Sciatic nerve (tissue), 2 donors: ENCODE measurements at regions of chr20 and their contacts with region 1.

Region 1: DNA sequence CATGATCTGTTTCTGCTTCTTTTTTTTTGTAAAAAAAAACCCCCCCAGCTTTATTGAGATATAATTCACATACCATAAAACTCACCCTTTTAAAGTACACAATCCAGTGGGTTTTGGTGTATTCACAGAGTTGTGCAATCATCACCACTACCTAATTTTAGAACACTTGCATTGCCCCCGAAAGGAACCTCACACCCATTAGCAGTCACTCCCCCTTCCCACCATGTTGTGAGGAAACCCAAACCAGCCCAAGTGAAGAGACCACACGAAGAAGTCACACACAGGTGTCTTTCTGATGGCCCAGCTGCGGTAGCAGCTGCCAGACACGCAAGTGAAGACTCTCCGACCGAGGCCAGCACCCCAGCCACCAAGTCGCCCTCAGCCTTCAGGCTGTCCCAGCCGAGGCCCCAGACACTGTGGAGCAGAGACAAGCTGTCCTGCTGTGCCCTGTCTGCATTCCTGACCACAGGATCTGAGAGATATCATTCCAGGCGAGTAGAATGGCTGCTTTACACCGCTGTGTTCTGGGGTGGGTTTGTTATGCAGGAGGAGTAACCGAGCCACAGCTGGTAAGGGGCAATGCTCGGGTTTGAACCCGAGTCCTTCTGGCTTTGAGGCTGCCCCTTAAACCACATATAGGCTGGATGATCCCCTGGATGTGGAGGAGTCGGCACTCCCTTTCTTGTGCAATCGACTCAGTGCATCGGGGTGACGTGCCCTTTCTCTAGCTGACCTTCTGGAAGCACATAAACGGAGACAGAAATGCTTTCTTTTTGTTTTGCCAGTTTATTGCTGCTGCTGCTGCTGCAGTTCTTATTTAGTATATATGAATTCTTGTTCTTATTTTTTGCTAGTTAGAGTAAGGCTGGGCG is 59.1 kb upstream of the PTPN1 start:
- DNase-seq: no peak
- ATAC-seq: peak; percentile 83

Region 2: DNA sequence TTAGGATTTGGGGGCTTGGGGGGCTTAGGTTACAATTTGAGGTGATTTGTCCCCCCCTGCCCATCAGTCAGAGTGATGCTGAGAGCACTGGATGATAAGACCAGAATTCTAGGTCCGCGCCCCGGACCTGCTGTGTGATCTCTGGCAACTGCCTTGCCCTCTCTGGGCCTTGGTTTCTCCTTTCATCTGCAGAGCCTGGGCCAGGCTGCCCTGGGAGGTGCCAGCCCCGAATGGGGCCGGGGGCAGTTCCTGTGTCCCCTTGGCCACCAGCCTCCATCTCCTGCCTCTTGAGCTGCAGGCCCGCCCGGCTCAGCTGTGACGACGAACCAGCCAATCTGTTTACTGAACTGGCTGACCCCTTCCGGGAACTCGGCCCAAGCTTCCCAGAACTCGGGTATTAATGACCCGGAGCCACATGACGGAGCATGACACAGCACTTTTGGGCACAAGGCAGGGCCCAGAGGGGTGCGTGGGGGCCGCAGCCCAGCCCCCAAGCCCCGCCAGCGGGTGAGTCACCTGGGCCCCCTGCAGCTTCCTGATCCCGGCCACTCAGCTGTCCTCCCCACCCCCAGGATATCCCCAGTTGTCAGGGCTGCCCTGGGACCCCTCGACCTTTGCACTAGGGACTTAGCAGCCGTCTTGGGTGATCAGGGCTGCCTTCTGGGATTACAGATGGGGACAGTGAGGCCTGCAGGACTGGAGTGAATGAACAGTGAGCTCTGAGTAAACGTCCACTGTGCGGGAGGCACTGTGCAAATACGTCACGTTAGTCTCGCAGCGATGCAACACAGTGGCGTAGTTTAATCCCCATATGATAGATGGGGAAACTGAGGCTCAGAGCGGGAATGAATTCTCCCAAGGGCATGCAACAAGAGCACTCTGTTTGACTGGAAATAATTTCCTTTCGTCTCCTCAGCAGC is 158.5 kb before region 1 on chr20:
- intact Hi-C with region 1: loop called (anchors 10 kb)
- DNase-seq: peak; percentile 99
- ATAC-seq: peak; percentile 95

Region 3: DNA sequence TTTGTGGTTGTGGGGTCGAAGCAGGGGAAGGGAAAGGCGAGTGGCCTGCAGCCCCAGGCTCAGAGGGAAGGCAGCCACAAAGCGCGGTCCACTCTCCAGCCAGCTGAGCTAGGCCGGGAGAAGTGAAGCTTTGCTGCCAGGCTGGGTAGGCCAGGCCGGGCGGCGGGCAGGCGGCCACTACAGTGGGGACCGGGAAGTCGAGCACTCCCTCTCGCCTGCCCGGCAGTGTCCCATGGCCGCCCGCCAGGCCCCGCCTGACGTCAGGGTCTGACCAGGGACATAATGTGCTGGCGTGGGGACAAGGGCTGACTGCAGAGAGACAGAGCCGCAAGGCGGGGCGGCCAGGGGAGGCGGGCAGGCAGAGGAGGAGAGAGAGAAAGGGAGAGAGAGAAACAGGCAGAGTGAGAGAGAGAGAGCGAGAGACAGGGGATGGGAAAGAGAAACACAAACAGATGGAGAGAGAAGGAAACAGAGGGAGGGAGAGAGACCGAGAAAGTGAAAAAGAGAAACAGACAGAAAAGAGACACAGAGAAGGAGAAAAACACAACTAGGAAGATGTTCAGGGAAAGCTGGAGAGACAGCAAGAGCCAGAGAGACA is 35.5 kb before region 1 on chr20:
- intact Hi-C with region 1: no loop called
- DNase-seq: peak; percentile 99
- ATAC-seq: peak; percentile 98

Region 4: GRCh38 chr20:50484276-50484976 is 33.3 kb after region 1 on chr20:
- intact Hi-C with region 1: no loop called
- DNase-seq: no peak
- ATAC-seq: no peak

Region 5: DNA sequence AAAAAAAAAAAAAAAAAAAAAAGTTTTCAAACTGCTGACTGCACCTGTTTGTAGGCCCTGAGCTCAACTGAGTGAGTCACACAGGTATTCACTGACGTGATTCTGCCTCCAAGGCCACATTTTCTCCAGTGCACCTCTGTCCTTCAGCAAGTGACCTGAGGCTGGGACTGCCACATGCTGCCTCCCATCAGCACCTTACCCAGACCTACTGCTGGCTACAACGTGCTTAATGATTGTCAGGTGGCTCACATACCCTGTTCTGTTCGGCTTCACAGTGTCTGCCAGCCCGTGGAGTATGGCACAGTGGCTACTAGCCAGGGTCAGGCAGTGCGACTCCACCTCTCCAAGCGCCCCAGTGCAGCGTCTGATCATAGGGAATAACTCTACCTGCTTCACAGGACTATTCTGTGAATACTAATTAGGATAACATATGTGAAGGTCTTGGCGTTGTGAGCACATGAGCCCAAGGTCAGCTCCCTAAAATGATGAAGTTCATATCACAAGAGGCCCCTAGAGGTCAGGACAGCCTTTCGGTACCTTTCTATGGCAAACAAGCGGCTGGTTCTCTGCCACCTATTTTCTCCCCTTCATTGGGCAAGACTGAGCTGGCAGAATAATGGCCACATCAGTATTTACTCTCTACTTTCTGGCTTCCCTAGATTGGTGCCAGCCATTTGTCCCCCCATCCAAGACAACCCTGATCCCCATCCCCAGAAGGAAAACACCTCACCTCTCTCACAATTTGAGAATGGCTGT is 212.2 kb after region 1 on chr20:
- intact Hi-C with region 1: no loop called
- DNase-seq: no peak
- ATAC-seq: no peak

Region 6: GRCh38 chr20:50731872-50732690 is 281.0 kb after region 1 on chr20:
- intact Hi-C with region 1: no loop called
- DNase-seq: no peak
- ATAC-seq: no peak